ENCODE measurements at regions of chr2 and their contacts with region 1.

Region 1: GRCh38 chr2:61854474-61855182 is 768 bp upstream of the FAM161A start:
- DNase-seq: peak; percentile 87
- H3K4me3 Mint-ChIP-seq: peak overlapping the region; percentile 98
- H3K27ac Mint-ChIP-seq: peak overlapping the region; percentile 88
- H3K4me1 Mint-ChIP-seq: peaks cover 23% of the 10 kb centered on the region
- H3K27me3 Mint-ChIP-seq: no peaks in the 10 kb centered on the region

Region 2: DNA sequence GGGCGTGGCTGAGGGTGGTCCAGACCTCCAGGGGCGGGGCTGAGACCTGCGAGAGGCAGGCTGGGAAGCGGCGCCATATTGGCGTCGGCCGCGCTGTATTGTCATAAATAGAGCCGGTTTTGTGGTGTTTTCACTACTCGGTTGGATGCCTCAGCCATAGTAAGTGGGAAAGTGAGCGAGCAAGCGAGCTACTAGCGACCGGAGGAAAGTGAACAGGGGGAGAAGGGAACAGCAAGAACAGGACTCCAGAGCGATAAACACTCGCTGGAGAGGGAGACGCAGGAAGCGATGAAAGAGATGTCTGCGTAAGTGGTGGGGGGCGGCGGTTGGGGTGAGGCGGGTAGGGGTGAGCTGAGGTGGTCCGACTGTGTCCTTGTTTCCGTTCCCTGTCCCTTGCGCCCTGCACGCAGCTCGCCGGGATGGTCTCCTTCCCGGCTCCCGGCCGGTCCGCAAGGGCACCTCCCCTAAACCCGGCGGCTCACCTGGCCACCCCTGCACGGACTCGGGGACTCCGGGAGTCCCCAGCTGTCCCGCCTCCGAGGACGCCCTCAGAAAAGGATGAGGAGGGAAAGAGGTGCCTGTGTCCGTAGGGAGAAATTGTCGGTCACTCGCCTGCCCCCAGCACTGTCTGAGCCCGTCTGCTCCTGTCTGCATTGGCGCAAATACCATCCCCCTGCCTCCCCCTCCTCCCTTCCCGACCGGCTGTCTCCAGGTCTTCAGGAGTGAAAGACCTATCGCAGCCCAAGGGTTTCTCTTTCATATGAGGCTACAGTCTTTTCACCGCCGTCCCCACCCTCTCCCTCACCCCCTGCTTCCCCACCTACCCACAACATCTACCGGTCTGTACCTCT is 1098.2 kb before region 1 on chr2 and contains the start of gene PAPOLG:
- intact Hi-C with region 1: loop called (anchors 10 kb)
- DNase-seq: peak; percentile 94
- H3K4me3 Mint-ChIP-seq: peak within 1 kb of the TSS; percentile 99
- H3K27ac Mint-ChIP-seq: peak within 1 kb of the TSS; percentile 99
- H3K4me1 Mint-ChIP-seq: peaks cover 31% of the 10 kb centered on the region
- H3K27me3 Mint-ChIP-seq: no peaks in the 10 kb centered on the region
- total RNA-seq, gene PAPOLG: 17.2 and 22.2 TPM in 2 replicates

Region 3: DNA sequence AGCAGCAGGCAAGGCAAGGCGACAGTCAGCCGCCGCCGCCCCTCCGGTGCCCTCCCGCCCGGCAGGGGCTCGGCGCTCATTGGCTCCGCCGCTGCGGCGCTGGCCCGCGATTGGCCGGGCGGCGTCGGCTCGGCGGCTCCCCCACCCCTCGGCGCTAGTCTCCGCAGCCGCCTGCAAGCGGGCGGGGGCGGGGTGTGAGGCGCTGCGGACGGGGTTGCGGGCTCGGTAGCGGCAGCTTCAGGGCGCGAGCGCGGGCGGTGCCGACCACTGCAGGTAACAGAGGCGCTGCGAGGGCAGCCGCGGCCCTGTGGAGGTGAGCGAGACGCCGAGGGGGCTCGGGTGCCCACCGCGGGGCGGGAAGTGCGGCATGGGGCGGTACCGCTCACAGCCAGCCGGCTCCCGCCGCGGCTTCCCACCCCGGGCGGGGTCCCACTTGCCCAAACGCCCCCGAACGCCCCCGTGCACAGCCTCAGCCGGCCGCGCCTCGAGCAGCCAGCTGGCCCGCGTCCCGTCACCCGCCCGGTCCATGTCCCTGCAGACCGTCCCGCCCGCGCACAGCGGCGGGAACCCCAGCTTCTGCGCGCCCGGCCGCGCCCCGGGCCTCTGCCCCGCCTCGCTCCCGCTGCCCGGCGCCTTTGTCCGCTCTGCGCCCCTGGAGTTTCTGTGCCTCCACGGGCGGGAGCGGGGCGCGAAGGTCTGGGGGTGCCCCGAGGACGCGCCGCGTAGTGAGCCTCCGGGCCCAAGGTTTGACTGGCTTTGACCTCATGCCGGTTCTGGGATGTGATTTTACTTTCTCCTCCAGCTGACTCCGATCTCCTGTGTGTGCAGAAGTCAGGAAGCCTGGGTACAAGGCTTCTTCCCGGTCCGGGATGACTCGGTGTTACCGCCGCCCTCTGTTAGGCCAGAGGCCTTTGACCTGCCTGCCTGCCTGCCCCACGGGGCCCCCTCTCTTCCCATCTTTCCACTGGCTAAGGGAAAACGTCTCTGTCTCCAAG is 788.6 kb before region 1 on chr2 and contains the start of gene SANBR:
- intact Hi-C with region 1: loop called (anchors 1 kb)
- DNase-seq: peak; percentile 85
- H3K4me3 Mint-ChIP-seq: peak within 1 kb of the TSS; percentile 92
- H3K27ac Mint-ChIP-seq: peak within 1 kb of the TSS; percentile 87
- H3K4me1 Mint-ChIP-seq: peaks cover 16% of the 10 kb centered on the region
- H3K27me3 Mint-ChIP-seq: peaks cover 5% of the 10 kb centered on the region
- total RNA-seq, gene SANBR: 2.0 and 2.2 TPM in 2 replicates

Region 4: DNA sequence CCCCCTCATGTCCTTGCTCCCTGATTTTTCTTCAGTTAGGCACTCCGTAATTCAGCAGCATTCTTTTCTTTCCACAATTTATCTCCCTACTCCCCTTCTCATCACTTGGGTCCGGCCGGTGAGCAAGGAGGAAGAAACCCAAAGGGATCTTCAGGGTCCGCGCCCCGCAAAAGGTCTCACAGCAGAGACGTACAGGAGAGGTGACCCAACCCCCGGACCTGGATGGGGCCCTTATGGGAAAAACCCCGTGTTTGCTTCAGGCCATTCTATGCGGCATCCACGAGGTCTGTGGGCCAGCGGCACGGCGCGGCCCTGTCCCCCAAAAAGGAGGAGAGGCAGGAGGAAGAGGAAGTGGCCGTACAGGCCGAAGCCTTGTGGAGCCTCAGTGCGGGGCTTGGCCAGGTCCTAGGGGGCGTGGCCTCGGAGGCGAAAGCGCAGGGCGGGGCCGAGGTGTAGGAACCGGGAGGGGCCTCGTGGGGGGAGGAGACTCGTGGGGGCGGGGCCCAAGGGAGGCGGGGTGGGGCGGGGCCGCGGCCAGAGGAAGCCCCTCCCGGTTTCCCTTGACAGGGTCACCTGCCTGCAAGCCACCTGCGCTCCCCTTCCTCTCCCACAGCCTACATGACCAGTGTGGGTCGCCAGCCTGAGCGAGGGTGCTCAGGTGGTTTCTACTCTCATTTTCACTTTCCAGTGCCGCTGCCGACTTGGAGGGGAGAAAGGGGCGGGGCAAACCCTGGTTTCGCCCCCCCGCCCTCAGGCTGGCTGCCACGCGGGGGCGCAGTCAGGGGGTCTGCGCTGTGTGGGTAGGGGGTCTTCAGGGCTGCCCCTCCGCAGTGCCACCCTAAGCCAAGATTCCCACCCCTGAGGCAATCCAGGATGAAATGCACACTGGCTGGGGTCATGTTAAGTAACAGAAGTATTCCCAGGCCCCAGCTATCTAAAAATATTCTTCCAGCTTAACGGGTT is 160.0 kb before region 1 on chr2:
- intact Hi-C with region 1: loop called (anchors 1 kb)
- DNase-seq: peak; percentile 80
- H3K4me3 Mint-ChIP-seq: peak overlapping the region; percentile 89
- H3K27ac Mint-ChIP-seq: peak overlapping the region; percentile 76
- H3K4me1 Mint-ChIP-seq: peaks cover 14% of the 10 kb centered on the region
- H3K27me3 Mint-ChIP-seq: peaks cover 2% of the 10 kb centered on the region

Region 5: DNA sequence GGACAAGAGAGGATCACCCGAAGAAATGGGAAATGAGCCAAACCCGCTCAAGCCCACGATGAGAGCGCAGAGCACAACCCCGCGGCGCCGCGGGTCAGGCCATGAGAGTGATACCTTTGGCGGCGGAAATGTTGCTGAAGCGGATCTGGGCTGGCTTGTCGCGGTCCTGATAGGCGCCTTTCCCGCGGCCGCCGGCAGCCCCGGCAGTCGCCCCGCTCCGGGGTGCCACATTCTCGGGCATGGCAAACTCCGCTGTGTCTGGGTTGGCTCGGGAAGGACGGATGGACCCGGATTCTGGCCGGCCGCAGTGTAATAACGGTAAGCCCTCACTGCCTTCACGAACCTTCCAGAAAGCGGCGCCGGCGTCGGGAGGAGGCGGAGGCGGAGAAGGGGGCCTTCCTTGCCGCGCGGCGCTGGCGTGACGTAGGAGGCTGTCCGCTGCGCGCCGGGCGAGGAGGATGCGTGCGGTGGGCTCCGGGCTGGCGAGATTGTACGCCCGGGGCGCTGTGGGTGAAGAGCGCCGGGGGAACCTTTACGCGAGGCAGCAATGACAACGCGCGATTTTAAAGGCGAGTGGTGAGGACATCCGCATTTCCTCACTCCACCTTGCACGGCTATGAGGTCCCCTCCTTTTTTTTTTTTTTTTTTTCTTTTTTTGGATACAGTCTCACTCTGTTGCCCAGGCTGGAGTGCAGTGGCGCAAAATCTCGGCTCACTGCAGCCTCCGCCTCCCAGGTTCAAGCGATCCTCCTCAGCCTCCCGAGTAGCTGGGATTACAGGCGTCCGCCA is 33.8 kb after region 1 on chr2 and contains the start of gene CCT4:
- intact Hi-C with region 1: loop called (anchors 1 kb)
- DNase-seq: peak; percentile 86
- H3K4me3 Mint-ChIP-seq: peak within 1 kb of the TSS; percentile 95
- H3K27ac Mint-ChIP-seq: peak within 1 kb of the TSS; percentile 97
- H3K4me1 Mint-ChIP-seq: peaks cover 23% of the 10 kb centered on the region
- H3K27me3 Mint-ChIP-seq: no peaks in the 10 kb centered on the region
- total RNA-seq, gene CCT4: 354 and 381 TPM in 2 replicates

Region 6: GRCh38 chr2:61949714-61950560 is 95.3 kb after region 1 on chr2:
- intact Hi-C with region 1: no loop called
- DNase-seq: no peak
- H3K4me3 Mint-ChIP-seq: no peak overlapping the region
- H3K27ac Mint-ChIP-seq: no peak overlapping the region
- H3K4me1 Mint-ChIP-seq: no peaks in the 10 kb centered on the region
- H3K27me3 Mint-ChIP-seq: peaks cover 4% of the 10 kb centered on the region

Region 7: DNA sequence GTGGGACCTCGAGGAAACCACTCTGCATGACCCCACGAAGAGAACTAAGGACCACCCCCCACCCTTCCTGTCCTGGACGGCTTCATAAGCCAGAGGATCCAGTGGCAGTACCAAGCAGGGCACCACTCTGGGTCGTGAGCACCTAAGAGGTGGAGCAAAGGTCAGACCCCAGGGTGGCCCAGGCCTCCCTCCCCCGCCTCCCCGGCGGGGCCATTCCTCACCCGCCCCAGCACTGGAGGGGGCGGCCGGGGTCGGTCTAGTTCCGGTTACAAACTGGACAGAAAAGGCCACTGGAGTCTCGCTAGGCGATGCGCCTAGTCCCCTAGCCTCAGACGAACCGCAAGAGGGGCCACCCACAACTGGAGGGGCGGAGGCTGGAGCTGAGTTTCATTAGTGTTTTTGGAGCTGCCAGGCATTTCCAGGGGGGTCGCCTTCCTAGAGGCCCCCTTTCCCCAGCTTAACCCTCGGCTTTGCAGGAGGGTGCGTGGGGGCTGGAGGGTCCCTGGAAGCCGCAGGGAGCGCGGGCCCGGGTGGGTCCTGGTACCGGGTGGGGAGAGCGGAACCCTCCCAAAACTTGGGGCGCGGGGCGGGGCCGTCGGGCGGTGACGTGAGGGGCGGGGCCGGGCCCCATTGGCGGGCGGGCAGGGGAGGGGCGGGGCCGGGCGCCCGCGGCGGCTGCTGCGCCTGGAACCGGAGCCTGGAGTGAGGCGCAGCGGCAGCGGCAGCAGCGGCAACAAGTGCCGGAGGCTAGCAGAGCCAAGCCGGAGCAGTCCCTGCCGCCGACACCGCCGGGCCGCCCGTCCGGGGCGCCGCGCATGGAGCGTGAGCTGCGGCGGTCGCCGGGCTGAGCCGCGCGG is 341.0 kb after region 1 on chr2 and contains the start of gene B3GNT2:
- intact Hi-C with region 1: loop called (anchors 5 kb)
- DNase-seq: peak; percentile 75
- H3K4me3 Mint-ChIP-seq: peak within 1 kb of the TSS; percentile 87
- H3K27ac Mint-ChIP-seq: peak within 1 kb of the TSS; percentile 89
- H3K4me1 Mint-ChIP-seq: peaks cover 36% of the 10 kb centered on the region
- H3K27me3 Mint-ChIP-seq: no peaks in the 10 kb centered on the region
- total RNA-seq, gene B3GNT2: 32.8 and 37.3 TPM in 2 replicates

Region 8: GRCh38 chr2:62334440-62335058 is 479.9 kb after region 1 on chr2:
- intact Hi-C with region 1: no loop called
- DNase-seq: no peak
- H3K4me3 Mint-ChIP-seq: no peak overlapping the region
- H3K27ac Mint-ChIP-seq: no peak overlapping the region
- H3K4me1 Mint-ChIP-seq: no peaks in the 10 kb centered on the region
- H3K27me3 Mint-ChIP-seq: no peaks in the 10 kb centered on the region

Measured in activated T-helper 1 cell treated with anti-CD3 and anti-CD28 coated beads, Interleukin-12 subunit alpha, Interleukin-12 subunit beta, Interleukin-2, Interleukin-4 antibody, amounts not matched to agents 30 ng/mL and 10 ng/mL and 1 ng/mL, durations not matched to agents 14 hours and 24 hours and 36 hours (primary cell).